Activated B cell treated with CpG ODN at 0.5 μM for 24 hours (primary cell): ENCODE measurements at regions of chr17 and their contacts with region 1.

Region 1: DNA sequence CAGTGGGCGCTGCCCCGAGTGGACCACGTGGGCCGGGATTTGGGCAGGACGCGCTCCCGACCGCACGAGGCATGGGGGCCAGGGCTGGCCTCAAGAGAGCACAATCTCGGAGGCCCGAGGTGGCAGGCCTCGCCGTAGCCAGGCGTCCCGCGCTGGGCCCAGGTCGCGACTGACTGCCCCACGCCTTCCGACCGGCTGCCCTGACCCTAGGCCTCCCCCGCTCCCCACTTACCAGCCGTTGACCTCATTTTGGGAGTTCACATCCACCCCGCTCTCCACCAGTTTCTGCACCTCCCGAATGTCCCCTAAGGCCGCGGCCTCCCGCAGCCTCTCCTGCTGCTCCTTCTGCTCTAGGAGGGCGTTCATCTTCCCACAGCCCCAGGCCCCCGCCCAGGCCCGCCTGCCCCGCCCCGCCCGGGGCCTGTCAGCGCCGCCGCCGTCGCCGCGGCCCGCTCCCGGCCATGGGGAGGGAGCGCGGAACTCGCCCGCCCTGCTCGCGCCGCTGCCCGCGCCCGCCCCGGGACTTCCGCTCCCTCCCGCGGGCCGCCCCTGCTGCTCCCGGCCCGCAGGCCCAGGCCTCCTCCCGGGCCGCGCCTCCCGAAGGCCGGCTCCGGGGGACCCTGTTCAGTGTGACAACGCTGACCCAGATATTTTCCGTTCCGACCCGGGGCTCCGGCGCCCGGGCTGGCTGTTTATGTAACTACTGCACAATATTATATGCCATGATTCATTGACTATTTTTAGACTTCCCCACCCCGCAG is at the start of gene ANKRD40:
- DNase-seq: peak; percentile 91
- ATAC-seq: peak; percentile 82
- H3K4me3 Mint-ChIP-seq: peak within 1 kb of the TSS; percentile 95
- H3K27ac Mint-ChIP-seq: peak within 1 kb of the TSS; percentile 96
- H3K4me1 Mint-ChIP-seq: peaks cover 38% of the 10 kb centered on the region
- H3K27me3 Mint-ChIP-seq: no peaks in the 10 kb centered on the region
- CTCF ChIP-seq: no peak
- total RNA-seq, gene ANKRD40: 39.0 and 40.3 TPM in 2 replicates

Region 2: DNA sequence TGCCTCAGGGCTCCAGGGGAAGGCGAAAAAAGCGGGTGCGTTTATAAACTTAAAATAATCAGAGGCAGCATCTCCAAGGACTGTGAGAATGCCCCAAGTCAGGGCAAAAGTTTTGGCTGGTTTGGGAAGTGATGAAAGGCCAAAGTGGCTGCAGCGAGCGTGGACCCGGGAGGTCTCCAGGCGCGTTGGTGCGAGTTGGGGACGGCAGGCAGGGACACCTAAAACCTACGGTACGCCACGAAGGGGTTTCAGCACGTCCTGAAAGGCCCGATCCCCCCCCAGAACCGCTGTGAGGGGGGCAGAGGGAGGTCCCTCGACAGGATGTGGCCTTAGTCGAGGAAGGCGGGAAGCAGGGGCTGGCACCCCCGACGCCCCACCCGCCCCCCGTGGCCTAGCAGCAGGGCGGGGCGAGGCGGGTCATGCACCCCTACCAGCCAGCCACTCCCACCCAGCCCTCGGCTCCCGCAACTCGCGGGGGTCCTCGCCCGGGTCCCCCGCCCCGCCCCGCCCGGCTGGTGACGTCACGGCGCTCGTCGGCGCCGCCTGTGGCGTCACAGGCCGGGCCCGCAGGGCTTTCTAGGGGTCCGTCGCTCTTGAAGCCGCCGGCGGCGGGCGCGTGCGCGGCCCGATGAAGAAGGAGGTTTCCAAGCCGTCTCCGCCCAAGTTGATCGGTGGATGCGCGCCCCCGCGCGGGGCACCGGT is 199.4 kb before region 1 on chr17 and contains the start of gene MYCBPAP:
- CTCF ChIA-PET with region 1: no interaction called
- POLR2A ChIA-PET with region 1: interaction called, 4 read pairs
- intact Hi-C with region 1: loop called (anchors 1 kb)
- DNase-seq: peak; percentile 77
- ATAC-seq: peak; percentile 82
- H3K4me3 Mint-ChIP-seq: peak within 1 kb of the TSS; percentile 89
- H3K27ac Mint-ChIP-seq: peak within 1 kb of the TSS; percentile 86
- H3K4me1 Mint-ChIP-seq: peaks cover 31% of the 10 kb centered on the region
- H3K27me3 Mint-ChIP-seq: no peaks in the 10 kb centered on the region
- CTCF ChIP-seq: no peak
- total RNA-seq, gene MYCBPAP: 2.1 and 2.3 TPM in 2 replicates

Region 3: DNA sequence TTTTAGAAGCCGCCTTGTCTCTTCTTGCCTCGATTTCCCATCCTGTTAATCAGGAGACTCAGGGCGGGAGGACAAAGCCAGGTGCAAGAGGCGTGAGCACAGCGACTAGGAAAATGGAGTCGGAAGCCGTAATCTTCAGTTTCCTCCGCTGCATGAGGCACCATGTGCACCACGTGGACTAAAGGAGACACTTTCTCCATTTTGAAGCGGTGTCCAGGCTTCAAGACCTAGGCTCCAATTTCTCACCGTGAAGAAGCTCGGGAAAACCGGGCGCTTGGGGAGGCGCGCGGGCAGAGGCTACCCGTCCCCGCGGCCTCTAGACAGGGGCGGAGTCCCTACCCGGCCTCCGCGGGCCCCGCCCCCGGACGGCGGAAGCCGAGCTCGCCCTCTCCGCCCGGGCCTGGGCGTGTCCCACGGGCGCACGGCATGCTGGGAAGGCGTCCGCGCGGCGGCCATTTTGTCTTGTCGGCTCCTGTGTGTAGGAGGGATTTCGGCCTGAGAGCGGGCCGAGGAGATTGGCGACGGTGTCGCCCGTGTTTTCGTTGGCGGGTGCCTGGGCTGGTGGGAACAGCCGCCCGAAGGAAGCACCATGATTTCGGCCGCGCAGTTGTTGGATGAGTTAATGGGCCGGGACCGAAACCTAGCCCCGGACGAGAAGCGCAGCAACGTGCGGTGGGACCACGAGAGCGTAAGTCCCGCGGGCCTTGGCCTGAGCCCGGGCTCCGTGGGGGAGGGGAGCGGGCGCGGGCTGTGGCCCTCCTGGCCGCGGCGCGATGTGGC is 11.9 kb after region 1 on chr17 and contains the start of gene LUC7L3:
- CTCF ChIA-PET with region 1: no interaction called
- POLR2A ChIA-PET with region 1: interaction called, 48 read pairs
- intact Hi-C with region 1: loop called (anchors 1 kb)
- DNase-seq: peak; percentile 97
- ATAC-seq: peak; percentile 92
- H3K4me3 Mint-ChIP-seq: peak within 1 kb of the TSS; percentile 97
- H3K27ac Mint-ChIP-seq: peak within 1 kb of the TSS; percentile 98
- H3K4me1 Mint-ChIP-seq: peaks cover 45% of the 10 kb centered on the region
- H3K27me3 Mint-ChIP-seq: no peaks in the 10 kb centered on the region
- CTCF ChIP-seq: no peak
- total RNA-seq, gene LUC7L3: 158 and 162 TPM in 2 replicates

Region 4: GRCh38 chr17:50763716-50764475 is 56.4 kb after region 1 on chr17:
- CTCF ChIA-PET with region 1: no interaction called
- POLR2A ChIA-PET with region 1: interaction called, 5 read pairs
- intact Hi-C with region 1: loop called (anchors 1 kb)
- DNase-seq: no peak
- ATAC-seq: no peak
- H3K4me3 Mint-ChIP-seq: peak overlapping the region; percentile 97
- H3K27ac Mint-ChIP-seq: no peak overlapping the region
- H3K4me1 Mint-ChIP-seq: peaks cover 38% of the 10 kb centered on the region
- H3K27me3 Mint-ChIP-seq: no peaks in the 10 kb centered on the region
- CTCF ChIP-seq: no peak

Region 5: GRCh38 chr17:51120739-51121617 is 413.5 kb after region 1 on chr17 and contains the start of gene SPAG9:
- CTCF ChIA-PET with region 1: no interaction called
- POLR2A ChIA-PET with region 1: no interaction called
- intact Hi-C with region 1: loop called (anchors 5 kb)
- DNase-seq: peak; percentile 95
- ATAC-seq: peak; percentile 83
- H3K4me3 Mint-ChIP-seq: peak within 1 kb of the TSS; percentile 94
- H3K27ac Mint-ChIP-seq: peak within 1 kb of the TSS; percentile 99
- H3K4me1 Mint-ChIP-seq: peaks cover 56% of the 10 kb centered on the region
- H3K27me3 Mint-ChIP-seq: no peaks in the 10 kb centered on the region
- CTCF ChIP-seq: no peak
- total RNA-seq, gene SPAG9: 41.6 and 49.3 TPM in 2 replicates

Region 6: GRCh38 chr17:51153210-51154072 is 446.0 kb after region 1 on chr17 and contains the start of gene NME1:
- CTCF ChIA-PET with region 1: no interaction called
- POLR2A ChIA-PET with region 1: no interaction called
- intact Hi-C with region 1: loop called (anchors 1 kb)
- DNase-seq: peak; percentile 99
- ATAC-seq: peak; percentile 88
- H3K4me3 Mint-ChIP-seq: no peak within 1 kb of the TSS
- H3K27ac Mint-ChIP-seq: no peak within 1 kb of the TSS
- H3K4me1 Mint-ChIP-seq: peaks cover 7% of the 10 kb centered on the region
- H3K27me3 Mint-ChIP-seq: no peaks in the 10 kb centered on the region
- CTCF ChIP-seq: no peak
- total RNA-seq, gene NME1: 130 and 138 TPM in 2 replicates

Region 7: GRCh38 chr17:51166197-51166986 is 458.9 kb after region 1 on chr17 and contains the start of gene NME2:
- CTCF ChIA-PET with region 1: no interaction called
- POLR2A ChIA-PET with region 1: no interaction called
- intact Hi-C with region 1: loop called (anchors 5 kb)
- DNase-seq: peak; percentile 85
- ATAC-seq: peak; percentile 86
- H3K4me3 Mint-ChIP-seq: peak within 1 kb of the TSS; percentile 86
- H3K27ac Mint-ChIP-seq: peak within 1 kb of the TSS; percentile 90
- H3K4me1 Mint-ChIP-seq: peaks cover 24% of the 10 kb centered on the region
- H3K27me3 Mint-ChIP-seq: no peaks in the 10 kb centered on the region
- CTCF ChIP-seq: no peak
- total RNA-seq, gene NME2: 439 and 524 TPM in 2 replicates